ENCODE measurements at regions of chr2 and their contacts with region 1.

Region 1: GRCh38 chr2:194539425-194539824 is 1117.6 kb upstream of the SLC39A10 start:
- DNase-seq: no peak
- ATAC-seq: no peak
- H3K4me3 Mint-ChIP-seq: no peak overlapping the region
- H3K27ac Mint-ChIP-seq: no peak overlapping the region
- H3K4me1 Mint-ChIP-seq: no peaks in the 10 kb centered on the region
- H3K27me3 Mint-ChIP-seq: no peaks in the 10 kb centered on the region
- CTCF ChIP-seq: no peak

Region 2: DNA sequence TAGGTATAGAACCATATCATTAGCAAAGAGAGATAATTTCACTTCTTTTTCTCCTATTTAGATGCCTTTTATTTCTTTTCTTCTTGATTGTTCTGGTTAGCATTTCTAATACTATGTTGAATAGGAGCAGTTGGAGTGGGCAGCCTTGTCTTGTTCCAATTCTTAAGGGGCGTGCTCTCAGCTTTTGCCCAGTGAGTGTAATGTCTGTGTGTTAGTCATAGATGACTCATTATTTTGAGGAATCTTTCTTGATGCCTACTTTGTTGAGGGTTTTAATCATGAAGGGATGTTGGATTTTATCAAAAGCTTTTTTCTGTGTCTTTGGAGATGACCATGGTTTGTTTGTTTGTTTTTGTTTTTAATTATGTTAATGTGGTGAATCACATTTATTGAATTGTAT is 335.5 kb before region 1 on chr2:
- CTCF ChIA-PET with region 1: no interaction called
- POLR2A ChIA-PET with region 1: no interaction called
- intact Hi-C with region 1: loop called (anchors 5 kb)
- DNase-seq: no peak
- ATAC-seq: no peak
- H3K4me3 Mint-ChIP-seq: no peak overlapping the region
- H3K27ac Mint-ChIP-seq: no peak overlapping the region
- H3K4me1 Mint-ChIP-seq: no peaks in the 10 kb centered on the region
- H3K27me3 Mint-ChIP-seq: no peaks in the 10 kb centered on the region
- CTCF ChIP-seq: no peak

Region 3: DNA sequence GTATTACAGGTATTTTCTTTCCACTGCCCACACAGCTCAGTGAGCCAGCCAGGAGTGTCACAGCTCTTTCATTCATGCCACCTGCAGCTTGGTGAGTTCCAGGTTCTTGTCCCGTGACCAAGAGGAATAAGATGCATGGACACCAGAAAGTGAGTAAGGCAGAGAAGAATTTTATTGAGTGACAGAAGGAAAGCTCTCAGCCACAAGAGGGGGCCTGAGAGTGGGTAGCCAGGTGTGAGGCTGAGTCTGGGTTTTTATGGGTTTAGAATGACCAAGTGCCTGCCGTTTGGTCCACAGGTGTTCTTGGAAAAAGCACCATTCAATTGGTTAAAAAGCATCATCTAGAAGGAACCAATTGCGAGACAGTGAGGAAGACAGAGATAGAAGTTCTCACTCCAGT is 20.5 kb after region 1 on chr2:
- CTCF ChIA-PET with region 1: no interaction called
- POLR2A ChIA-PET with region 1: no interaction called
- intact Hi-C with region 1: no loop called
- DNase-seq: no peak
- ATAC-seq: no peak
- H3K4me3 Mint-ChIP-seq: no peak overlapping the region
- H3K27ac Mint-ChIP-seq: no peak overlapping the region
- H3K4me1 Mint-ChIP-seq: no peaks in the 10 kb centered on the region
- H3K27me3 Mint-ChIP-seq: no peaks in the 10 kb centered on the region
- CTCF ChIP-seq: no peak